GM10248 (cell line): ENCODE measurements at regions of chr10 and their contacts with region 1.

Region 1: DNA sequence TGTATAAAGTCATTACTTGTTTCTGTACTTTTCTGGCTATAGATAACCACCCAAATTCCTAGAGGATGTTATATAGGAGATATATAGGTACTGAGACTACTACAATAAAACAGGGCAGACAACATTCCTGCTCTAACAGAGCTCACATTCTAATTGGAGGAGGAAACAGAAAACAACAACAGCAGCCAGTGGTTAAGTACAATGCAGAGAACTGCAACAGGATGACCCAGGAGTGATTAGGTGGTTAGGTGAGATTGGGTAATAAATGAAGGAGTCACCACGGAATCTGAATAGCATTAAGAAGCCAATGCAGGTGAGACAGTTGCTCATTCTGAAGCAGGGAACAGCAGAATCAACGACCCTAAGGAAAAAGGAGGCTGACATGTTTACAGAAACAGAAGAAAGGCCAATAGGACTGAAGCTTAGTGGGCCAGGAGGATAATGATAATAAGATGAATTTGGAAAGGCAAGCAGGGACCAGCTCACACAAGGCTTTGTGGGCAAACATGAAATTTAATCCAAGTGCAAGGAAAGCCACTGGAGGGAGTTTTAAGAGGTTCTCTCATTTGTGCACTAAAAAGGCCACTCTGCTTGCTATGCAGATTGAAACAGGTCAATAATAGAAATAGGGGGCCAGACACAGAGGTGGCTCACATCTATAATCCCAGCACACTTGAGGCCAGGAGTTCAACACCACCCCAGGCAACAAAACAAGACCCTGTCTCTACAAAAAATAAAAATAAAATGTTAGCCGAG is 16.9 kb upstream of the REEP3 start:
- DNase-seq: no peak
- CTCF ChIP-seq: no peak

Region 2: GRCh38 chr10:63456437-63457210 is 47.7 kb before region 1 on chr10:
- CTCF ChIA-PET with region 1: interaction called, 3 read pairs
- POLR2A ChIA-PET with region 1: interaction called, 10 read pairs
- DNase-seq: no peak
- CTCF ChIP-seq: no peak

Region 3: GRCh38 chr10:63515002-63515763 is 10.9 kb after region 1 on chr10:
- CTCF ChIA-PET with region 1: interaction called, 18 read pairs
- POLR2A ChIA-PET with region 1: no interaction called
- DNase-seq: no peak
- CTCF ChIP-seq: no peak

Region 4: DNA sequence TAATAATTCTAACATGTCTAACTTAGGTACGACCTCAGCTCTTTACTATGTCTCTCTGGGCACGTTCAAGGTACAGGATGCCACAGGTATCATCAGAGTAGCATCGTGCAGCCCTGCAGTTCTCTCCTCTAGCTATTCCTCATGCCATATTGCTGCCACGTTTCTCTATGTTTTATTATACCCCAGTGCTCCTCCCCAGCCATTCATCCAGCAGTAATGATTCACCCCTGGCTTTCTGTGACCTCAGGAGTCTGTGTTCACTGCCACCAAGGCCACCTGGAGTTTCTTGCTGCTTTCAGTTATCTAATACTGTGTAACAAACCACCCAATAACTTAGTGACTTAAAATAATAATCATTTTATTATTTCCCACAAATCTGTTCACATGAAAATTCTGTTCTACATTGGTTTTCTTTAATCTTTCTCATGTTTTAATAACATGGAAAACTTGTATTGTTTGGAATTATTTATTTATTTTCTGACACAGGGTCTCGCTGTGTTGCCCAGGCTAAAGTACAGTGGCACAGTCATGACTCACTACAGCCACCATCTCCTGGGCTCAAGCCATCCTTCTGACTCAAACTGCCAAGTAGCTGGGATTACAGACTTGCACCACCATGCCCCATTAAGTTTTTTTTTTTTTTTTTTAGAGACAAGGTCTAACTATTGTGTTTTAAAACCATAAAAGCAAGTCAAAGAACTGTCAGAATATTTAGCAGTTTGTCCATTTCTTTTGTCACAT is 38.7 kb after region 1 on chr10:
- CTCF ChIA-PET with region 1: no interaction called
- POLR2A ChIA-PET with region 1: no interaction called
- DNase-seq: no peak
- CTCF ChIP-seq: no peak